ENCODE measurements at regions of chr15 and their contacts with region 1.

Region 1: DNA sequence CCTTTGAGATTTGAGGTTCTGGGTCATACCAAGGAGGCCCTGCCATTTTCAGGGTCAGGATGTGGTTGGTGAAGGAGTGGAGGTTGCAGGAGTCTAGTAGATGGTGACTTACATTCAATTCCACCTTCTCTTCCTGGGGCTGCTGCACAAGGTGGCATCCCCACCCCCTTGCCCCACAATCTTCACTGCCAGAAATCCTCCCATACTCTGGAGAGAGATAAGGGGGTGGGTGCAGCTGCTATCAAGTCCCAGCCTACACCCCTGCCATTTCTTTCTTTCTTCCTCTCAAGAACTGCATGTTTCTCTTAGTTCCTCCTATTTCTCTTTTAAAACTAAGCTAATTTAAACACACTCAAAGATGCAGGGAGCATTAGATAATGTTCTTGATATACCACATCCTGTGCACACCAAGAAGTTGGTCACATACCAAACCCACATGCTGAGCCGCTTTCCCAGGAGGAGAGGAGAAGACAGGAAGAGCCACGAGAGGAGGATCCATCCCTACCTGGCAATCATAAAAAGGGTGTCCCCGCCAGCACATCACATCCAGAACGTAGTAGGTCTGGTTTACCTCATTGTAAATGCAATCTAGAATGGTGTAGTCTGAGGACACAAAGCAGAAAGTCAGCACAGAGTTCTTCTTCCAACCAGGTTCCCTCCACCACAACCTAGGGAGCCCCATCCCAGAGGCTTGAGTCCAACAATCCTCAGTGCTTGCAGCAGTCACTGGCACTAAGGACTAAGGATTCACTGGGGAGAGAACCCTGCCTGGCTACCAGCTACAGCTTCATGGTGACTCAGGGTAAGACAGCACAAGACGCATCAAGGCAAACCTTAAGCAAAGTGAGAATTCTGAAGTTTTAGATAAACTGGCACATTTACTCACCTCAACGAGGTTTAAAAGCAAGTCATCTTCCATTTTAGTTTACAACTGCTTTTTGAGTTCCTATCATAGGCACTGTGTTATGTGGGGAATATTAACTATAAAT is 18.5 kb downstream of the SNUPN start:
- DNase-seq: no peak
- H3K4me3 ChIP-seq: no peak overlapping the region
- H3K27ac ChIP-seq: no peak overlapping the region
- H3K27me3 ChIP-seq: no peaks in the 10 kb centered on the region
- CTCF ChIP-seq: no peak

Region 2: DNA sequence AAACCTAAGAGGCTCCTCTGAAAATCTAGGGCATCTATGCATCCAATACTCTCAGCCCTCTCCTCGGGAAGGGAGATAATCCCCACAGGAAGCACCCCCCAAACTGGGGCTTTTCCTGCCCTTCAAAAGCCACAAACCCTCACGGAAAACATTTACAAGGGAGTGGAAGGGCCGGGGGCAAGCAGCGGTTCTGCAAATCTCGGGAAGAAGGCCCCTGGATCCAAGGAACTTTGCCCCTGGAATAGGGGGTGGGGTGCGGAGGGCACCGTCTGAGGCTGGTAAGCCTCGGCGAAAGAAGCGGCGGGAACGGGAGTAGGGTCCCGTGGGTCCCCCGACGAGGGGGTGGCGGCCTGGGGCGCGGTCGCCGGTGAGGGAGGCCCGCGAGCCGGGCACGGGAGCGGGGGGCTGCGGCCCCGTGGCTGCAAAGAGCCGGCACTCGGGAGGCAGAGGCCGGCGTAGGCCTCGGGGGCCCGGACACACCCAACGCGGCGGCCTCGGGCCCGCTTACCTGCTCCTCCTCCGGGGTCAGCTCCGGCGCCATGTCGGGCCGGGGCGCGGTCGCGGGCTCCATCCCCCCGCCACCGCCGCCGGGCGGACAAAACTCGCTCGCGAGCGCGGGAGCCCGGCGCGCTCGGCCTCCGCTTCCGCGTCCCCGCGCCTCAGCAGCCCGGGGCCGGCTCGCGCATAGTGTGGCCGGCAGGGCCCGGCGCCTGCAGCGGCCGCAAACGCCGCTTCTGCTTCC is 28.6 kb before region 1 on chr15:
- CTCF ChIA-PET with region 1: interaction called, 3 read pairs
- POLR2A ChIA-PET with region 1: interaction called, 15 read pairs
- DNase-seq: no peak
- H3K4me3 ChIP-seq: peak overlapping the region; percentile 83
- H3K27ac ChIP-seq: peak overlapping the region; percentile 52
- H3K27me3 ChIP-seq: no peaks in the 10 kb centered on the region
- CTCF ChIP-seq: no peak

Region 3: DNA sequence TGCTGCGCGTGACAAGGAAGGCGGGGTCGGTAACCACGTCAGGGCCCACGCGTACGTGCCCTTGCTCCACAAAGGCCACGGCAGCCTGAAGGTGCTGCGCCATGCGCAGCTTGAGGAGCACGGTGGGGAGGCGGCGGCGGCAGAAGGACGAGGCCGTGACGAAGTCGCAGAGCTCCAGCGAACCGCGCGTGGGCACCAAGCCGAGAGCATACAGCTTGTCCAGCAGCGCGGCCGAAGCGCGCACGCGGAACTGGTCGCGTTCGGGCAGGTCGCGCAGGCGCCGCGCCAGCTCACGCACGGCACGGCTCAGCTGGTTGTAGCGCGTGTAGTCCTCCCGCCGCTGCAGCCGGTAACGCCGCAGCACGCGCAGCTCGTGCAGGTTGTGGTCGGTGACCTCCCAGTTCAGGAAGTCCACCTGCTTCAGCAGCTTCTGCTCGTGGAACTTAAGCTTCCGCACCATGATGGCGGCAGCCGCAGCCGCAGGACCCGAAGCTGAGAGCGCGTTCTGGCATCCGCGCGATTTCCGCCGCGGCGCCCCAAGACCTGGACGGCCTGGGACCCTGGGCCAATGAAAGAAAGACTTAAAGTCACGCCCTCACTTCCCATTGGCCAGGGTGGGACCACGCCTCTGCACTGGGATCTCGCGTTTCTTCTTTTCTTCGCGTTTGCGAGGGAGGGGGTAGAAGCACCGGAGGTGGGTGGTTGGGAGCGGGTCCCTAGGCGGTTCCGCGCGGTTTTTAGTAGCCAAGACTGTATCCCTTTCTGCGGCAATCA is 32.9 kb after region 1 on chr15 and contains the start of gene IMP3:
- CTCF ChIA-PET with region 1: no interaction called
- POLR2A ChIA-PET with region 1: no interaction called
- DNase-seq: peak; percentile 85
- H3K4me3 ChIP-seq: peak within 1 kb of the TSS; percentile 98
- H3K27ac ChIP-seq: peak within 1 kb of the TSS; percentile 85
- H3K27me3 ChIP-seq: no peaks in the 10 kb centered on the region
- CTCF ChIP-seq: no peak
- polyA plus RNA-seq, gene IMP3: 38.9 and 42.3 TPM in 2 replicates

Region 4: DNA sequence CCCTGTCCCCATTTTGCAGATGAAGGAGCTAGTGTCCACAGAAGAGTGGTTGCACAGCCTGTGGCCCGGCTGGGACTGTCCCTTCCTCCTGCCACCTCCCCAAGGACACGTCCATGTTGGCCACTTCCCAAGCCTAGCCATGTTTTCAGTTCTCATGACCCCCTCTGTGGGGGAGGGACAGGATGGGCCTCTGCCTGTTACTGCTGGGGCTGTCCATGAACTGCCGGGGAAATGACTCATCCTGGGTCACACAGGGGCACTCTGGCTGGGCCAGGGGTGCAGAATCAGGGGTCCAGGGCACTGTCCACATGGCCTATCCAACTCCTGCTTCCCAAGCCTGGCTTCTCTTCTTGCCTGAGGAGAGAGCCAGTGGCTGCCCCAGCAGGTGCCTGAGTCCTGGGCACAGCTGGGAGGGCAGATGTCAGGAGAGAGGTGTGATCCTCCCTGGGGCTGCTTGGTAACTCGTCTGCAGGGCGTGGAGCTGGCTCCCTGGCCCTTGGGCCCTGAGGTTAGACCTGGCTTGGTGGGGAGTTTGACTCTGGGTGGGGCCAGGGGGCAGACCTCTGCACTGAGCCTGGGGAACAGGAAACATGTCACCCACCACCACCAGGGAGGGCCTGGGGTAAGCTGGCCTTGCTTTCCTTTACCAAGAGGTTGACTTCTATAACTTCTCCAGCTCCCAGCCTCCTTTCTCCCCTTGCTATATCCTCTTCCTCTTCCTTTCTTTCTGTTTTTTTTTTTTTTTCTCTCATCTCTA is 44.5 kb after region 1 on chr15:
- CTCF ChIA-PET with region 1: no interaction called
- POLR2A ChIA-PET with region 1: no interaction called
- DNase-seq: no peak
- H3K4me3 ChIP-seq: peak overlapping the region; percentile 90
- H3K27ac ChIP-seq: no peak overlapping the region
- H3K27me3 ChIP-seq: no peaks in the 10 kb centered on the region
- CTCF ChIP-seq: no peak

Region 5: DNA sequence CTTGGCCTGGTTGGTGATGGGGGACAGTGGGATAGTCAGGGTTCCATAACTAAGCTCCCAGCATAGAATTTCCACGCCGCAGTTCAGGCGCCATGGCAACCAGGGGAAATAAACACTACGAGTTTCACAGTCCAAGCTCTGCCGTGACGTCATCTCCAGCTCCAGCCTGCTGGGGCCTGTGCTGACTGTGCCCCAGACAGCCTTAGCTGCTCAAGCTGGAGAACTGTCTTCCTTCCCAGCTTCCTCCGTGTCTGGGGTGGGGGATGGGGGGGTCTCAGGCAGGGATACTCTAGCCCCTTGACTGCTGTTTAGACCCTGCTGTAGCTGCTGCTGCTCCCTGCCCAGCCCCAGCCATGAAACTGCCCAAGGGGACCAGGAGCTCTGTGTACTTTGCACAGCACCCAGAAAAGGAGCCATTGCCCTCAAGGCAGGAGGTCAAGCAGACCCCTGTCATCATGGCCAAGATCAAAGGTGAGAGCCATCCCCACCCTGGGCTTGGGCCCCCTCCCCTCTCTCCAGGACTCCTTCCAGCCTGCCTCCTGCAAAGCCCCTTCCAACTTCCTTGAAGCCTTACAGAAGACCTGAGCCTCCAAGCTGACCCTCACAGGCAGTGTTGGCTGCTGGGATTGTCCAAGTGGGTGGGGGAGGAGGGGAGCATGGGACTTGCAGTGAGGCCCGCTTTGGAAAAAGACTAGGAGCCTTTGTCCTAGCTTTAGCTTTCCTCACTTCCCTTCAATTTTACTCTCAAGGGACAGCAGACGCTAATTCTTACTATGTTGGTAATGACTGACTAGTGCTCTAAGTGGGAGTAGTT is 117.0 kb after region 1 on chr15:
- CTCF ChIA-PET with region 1: no interaction called
- POLR2A ChIA-PET with region 1: no interaction called
- DNase-seq: peak; percentile 87
- H3K4me3 ChIP-seq: no peak overlapping the region
- H3K27ac ChIP-seq: peak overlapping the region; percentile 39
- H3K27me3 ChIP-seq: no peaks in the 10 kb centered on the region
- CTCF ChIP-seq: no peak